ENCODE measurements at regions of chr10 and their contacts with region 1.

Region 1: DNA sequence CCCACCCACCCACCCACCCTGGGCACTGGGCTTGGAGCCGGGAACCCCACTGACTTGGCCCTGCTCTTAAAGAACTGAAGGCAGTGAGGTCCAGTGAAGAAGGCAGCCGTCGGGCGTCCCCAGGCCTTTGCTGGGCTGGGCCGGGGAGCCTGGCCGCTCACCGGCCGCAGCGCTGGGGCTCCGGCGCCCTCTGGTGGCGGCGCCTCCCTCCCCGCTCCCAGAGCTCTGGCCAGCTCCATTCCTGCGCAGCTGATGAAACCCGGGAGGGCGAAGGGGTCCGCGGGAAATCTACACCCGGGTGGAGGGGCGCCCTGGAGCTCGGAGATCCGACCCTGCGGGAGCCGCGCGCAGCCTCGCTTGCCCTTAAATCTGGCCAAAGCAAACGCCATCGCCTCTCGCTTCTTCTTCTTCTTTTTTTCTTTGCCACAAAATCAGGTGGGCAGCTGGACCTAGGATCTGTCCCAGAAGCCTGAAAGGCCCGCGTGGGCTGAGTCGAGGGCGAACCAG is 1.7 kb upstream of the CXCL12 start:
- DNase-seq: no peak
- ATAC-seq: peak; percentile 98
- H3K4me3 ChIP-seq: no peak overlapping the region
- H3K27ac ChIP-seq: no peak overlapping the region
- H3K4me1 ChIP-seq: no peaks in the 10 kb centered on the region
- H3K27me3 ChIP-seq: peaks cover 0 to 2% of the 10 kb centered on the region in 2 experiments; a peak in 3 of 4 replicates
- CTCF ChIP-seq: peak; percentile 71 to 90 (median 89)
- EP300 ChIP-seq: no peak
- POLR2A ChIP-seq: no peak
- RAD21 ChIP-seq: peak; percentile 90

Region 2: DNA sequence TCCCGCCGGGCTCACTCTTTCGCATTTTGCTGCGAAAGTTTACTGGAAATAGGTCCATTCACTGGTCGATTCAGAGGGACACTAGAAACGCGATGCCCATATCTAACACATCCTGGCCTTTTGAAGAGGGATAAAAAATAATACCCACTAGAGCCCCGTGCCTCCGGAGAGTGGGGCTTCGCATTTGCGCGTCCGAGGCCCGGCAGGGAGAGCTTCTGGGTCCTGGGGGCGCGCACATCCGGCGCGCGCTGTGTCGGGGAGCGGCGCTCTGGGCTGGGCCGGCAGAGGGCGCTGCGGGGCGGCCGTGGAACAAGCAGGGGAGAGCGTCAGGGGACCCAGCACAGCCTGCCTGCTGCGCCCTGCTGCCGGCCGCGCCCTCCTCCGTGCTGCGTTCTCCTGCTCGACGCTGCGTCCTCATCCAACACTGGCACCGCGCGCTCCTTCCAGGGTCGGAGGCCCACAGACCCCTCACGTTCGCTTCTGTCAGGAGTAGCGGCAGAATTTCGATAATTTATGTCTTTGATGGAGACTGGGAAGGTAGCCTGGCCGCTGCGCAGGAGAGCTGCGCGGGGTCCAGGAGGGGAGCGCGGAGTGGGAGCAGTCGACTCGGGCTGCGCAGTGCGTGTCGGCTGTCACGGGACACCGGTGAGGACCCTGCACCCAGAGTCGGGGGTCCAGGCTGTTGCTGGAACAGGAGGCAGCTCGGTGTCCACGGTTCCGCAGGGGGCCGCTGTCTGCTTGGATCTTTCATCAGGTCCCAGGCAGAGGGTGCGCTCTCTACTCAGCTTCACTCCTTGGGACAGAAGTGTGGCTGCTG is 696.4 kb before region 1 on chr10:
- CTCF ChIA-PET with region 1: interaction called, 32 read pairs
- POLR2A ChIA-PET with region 1: no interaction called
- RAD21 ChIA-PET with region 1: interaction called, 10 read pairs
- SMC1A ChIA-PET with region 1: interaction called, 3 read pairs
- in situ Hi-C with region 1: no loop called
- intact Hi-C with region 1: loop called (anchors 5 kb)
- DNase-seq: no peak
- ATAC-seq: peak; percentile 100
- H3K4me3 ChIP-seq: peak overlapping the region; percentile 69; the same call in 1 of the 2 replicates
- H3K27ac ChIP-seq: no peak overlapping the region
- H3K4me1 ChIP-seq: peaks cover 3% of the 10 kb centered on the region; the same call in 1 of the 2 replicates
- H3K27me3 ChIP-seq: no peaks in the 10 kb centered on the region; a peak in 1 of 4 replicates
- CTCF ChIP-seq: peak; percentile 73 to 79 (median 74)
- EP300 ChIP-seq: no peak
- POLR2A ChIP-seq: no peak
- RAD21 ChIP-seq: peak; percentile 72

Region 3: GRCh38 chr10:44261710-44262455 is 124.7 kb before region 1 on chr10:
- CTCF ChIA-PET with region 1: interaction called, 3 read pairs
- POLR2A ChIA-PET with region 1: interaction called, 4 read pairs
- RAD21 ChIA-PET with region 1: interaction called, 3 read pairs
- SMC1A ChIA-PET with region 1: interaction called, 3 read pairs
- in situ Hi-C with region 1: no loop called
- intact Hi-C with region 1: loop called (anchors 5 kb)
- DNase-seq: peak; percentile 55
- ATAC-seq: peak; percentile 68
- H3K4me3 ChIP-seq: no peak overlapping the region
- H3K27ac ChIP-seq: peak overlapping the region; percentile 68
- H3K4me1 ChIP-seq: peaks cover 56% of the 10 kb centered on the region
- H3K27me3 ChIP-seq: no peaks in the 10 kb centered on the region
- CTCF ChIP-seq: no peak
- EP300 ChIP-seq: 0 out of 4 replicates have a peak, but pooled peaks have one; percentile 12 to 22
- POLR2A ChIP-seq: no peak
- RAD21 ChIP-seq: no peak

Region 4: DNA sequence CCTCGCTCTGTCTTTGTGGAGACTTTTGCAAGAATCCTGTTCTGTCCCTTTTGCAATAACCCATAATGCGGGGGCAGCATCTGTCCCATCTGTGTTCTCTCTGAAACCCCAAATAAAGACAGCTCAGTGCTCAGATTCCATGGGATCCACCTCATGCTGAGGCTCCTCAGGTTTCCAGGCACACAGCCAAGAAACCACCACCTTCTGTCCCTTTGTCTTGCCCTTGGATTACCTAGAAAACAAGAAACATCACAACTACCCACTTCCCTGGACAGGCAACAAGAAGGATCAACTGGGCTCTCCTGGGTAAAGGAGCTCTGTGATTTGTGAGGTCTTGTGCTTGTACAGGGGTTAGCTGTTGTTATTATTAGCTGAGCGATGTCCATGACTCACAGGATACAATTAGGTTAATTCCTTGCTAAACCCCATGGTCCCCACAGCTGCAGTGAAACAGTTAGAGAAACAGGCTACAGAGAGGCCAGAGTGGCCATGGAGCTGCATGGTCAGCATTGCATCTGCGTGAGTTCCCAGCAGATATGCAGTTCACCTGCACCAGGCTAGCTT is 51.9 kb before region 1 on chr10:
- CTCF ChIA-PET with region 1: no interaction called
- POLR2A ChIA-PET with region 1: no interaction called
- RAD21 ChIA-PET with region 1: no interaction called
- SMC1A ChIA-PET with region 1: interaction called, 3 read pairs
- in situ Hi-C with region 1: no loop called
- intact Hi-C with region 1: loop called (anchors 5 kb)
- DNase-seq: no peak
- ATAC-seq: no peak
- H3K4me3 ChIP-seq: no peak overlapping the region
- H3K27ac ChIP-seq: no peak overlapping the region
- H3K4me1 ChIP-seq: no peaks in the 10 kb centered on the region
- H3K27me3 ChIP-seq: no peaks in the 10 kb centered on the region
- CTCF ChIP-seq: no peak
- EP300 ChIP-seq: no peak
- POLR2A ChIP-seq: no peak
- RAD21 ChIP-seq: no peak

Region 5: GRCh38 chr10:44398747-44399658 is 12.4 kb after region 1 on chr10:
- CTCF ChIA-PET with region 1: interaction called, 13 read pairs
- POLR2A ChIA-PET with region 1: no interaction called
- RAD21 ChIA-PET with region 1: interaction called, 3 read pairs
- SMC1A ChIA-PET with region 1: interaction called, 5 read pairs
- in situ Hi-C with region 1: no loop called
- intact Hi-C with region 1: no loop called
- DNase-seq: no peak
- ATAC-seq: no peak
- H3K4me3 ChIP-seq: no peak overlapping the region
- H3K27ac ChIP-seq: no peak overlapping the region
- H3K4me1 ChIP-seq: no peaks in the 10 kb centered on the region
- H3K27me3 ChIP-seq: no peaks in the 10 kb centered on the region; a peak in 2 of 4 replicates
- CTCF ChIP-seq: no peak
- EP300 ChIP-seq: no peak
- POLR2A ChIP-seq: no peak
- RAD21 ChIP-seq: no peak

Region 6: GRCh38 chr10:45160271-45160670 is 773.7 kb after region 1 on chr10:
- CTCF ChIA-PET with region 1: no interaction called
- POLR2A ChIA-PET with region 1: no interaction called
- RAD21 ChIA-PET with region 1: no interaction called
- SMC1A ChIA-PET with region 1: no interaction called
- in situ Hi-C with region 1: no loop called
- intact Hi-C with region 1: no loop called
- DNase-seq: no peak
- ATAC-seq: no peak
- H3K4me3 ChIP-seq: no peak overlapping the region
- H3K27ac ChIP-seq: no peak overlapping the region
- H3K4me1 ChIP-seq: no peaks in the 10 kb centered on the region
- H3K27me3 ChIP-seq: peaks cover 0 to 2% of the 10 kb centered on the region in 2 experiments; a peak in 1 of 4 replicates
- CTCF ChIP-seq: no peak
- EP300 ChIP-seq: no peak
- POLR2A ChIP-seq: no peak
- RAD21 ChIP-seq: no peak

Measured in GM12878 (cell line).